AG04450 (cell line): ENCODE measurements at regions of chr4 and their contacts with region 1.

Region 1: GRCh38 chr4:10655986-10656385 is 28.6 kb downstream of the CLNK start:
- DNase-seq: peak; percentile 29
- H3K4me3 ChIP-seq: no peak overlapping the region
- H3K27ac ChIP-seq: no peak overlapping the region
- H3K27me3 ChIP-seq: no peaks in the 10 kb centered on the region
- CTCF ChIP-seq: no peak

Region 2: GRCh38 chr4:10783351-10783750 is 127.4 kb after region 1 on chr4:
- CTCF ChIA-PET with region 1: no interaction called
- POLR2A ChIA-PET with region 1: interaction called, 11 read pairs
- DNase-seq: peak; percentile 59
- H3K4me3 ChIP-seq: no peak overlapping the region
- H3K27ac ChIP-seq: peak overlapping the region; percentile 63
- H3K27me3 ChIP-seq: no peaks in the 10 kb centered on the region
- CTCF ChIP-seq: no peak

Region 3: DNA sequence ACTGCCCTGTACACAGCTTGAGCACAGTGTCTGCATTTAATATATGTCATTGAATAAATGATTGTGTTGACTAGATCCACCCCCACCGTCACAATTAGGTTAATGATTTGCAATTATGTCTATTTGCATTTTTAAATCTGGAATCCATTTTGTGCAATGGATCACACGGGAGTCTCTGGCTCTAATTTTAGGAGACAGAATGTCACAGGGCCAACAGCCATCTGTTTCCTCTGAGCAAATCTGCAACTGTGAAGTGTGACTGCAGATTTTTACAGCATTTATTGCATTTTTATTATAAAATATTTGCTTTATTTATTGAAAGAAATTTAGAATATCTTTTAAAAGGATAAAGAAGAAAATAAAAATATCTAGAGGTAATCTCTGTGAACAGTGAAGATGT is 455.9 kb after region 1 on chr4:
- CTCF ChIA-PET with region 1: interaction called, 10 read pairs
- POLR2A ChIA-PET with region 1: no interaction called
- DNase-seq: no peak
- H3K4me3 ChIP-seq: no peak overlapping the region
- H3K27ac ChIP-seq: no peak overlapping the region
- H3K27me3 ChIP-seq: no peaks in the 10 kb centered on the region
- CTCF ChIP-seq: no peak